Posterior vena cava (tissue), 2 donors: ENCODE measurements at regions of chr10 and their contacts with region 1.

Region 1: DNA sequence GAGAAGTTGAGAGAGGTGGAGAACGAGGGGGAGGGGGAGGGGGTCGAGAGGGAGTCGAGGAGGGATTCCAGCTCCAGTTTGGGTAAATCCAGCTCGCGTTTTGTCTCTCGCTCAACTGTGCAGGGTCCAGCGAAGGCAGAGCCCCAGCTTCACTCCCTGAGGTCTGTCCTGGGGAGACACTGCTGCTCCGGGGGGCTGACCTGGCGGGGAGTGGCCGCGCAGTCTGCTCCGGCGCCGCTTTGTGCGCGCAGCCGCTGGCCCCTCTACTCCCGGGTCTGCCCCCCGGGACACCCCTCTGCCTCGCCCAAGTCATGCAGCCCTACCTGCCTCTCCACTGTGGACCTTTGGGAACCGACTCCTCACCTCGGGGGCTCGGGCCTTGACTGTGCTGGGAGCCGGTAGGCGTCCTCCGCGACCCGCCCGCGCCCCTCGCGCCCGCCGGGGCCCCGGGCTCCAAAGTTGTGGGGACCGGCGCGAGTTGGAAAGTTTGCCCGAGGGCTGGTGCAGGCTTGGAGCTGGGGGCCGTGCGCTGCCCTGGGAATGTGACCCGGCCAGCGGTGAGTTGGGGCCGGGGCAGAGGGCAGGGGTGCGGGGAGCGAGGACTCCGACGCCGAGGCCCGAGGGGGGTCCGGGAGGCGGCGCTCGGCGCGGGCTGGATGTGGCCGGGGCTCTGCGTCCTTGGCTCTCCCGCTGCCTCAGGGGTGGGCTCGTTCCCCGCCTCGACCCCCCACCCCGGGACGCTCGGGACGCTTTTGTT is at the start of gene TET1:
- DNase-seq: no peak
- total RNA-seq, gene TET1: 3.2 to 4.3 TPM

Region 2: GRCh38 chr10:68598978-68599770 is 38.8 kb after region 1 on chr10:
- intact Hi-C with region 1: loop called in 1 of 2 experiments (anchors 5 kb)
- DNase-seq: no peak

Region 3: GRCh38 chr10:68618234-68618633 is 57.9 kb after region 1 on chr10:
- intact Hi-C with region 1: no loop called
- DNase-seq: no peak

Region 4: GRCh38 chr10:68700197-68700596 is 139.8 kb after region 1 on chr10:
- intact Hi-C with region 1: loop called in 1 of 2 experiments (anchors 10 kb)
- DNase-seq: no peak